CD8-positive, alpha-beta T cell (primary cell): ENCODE measurements at regions of chr16 and their contacts with region 1.

Region 1: GRCh38 chr16:29848420-29849297 is 14.4 kb downstream of the CDIPT start:
- DNase-seq: peak; percentile 62 to 92 (median 84)
- ATAC-seq: peak; percentile 98
- H3K4me3 ChIP-seq: no peak overlapping the region
- H3K4me3 Mint-ChIP-seq: no peak overlapping the region
- H3K27ac ChIP-seq: no peak overlapping the region
- H3K27ac Mint-ChIP-seq: no peak overlapping the region
- H3K4me1 ChIP-seq: no peaks in the 10 kb centered on the region
- H3K4me1 Mint-ChIP-seq: peaks cover 3% of the 10 kb centered on the region
- H3K27me3 ChIP-seq: no peaks in the 10 kb centered on the region
- H3K27me3 Mint-ChIP-seq: no peaks in the 10 kb centered on the region
- CTCF ChIP-seq: peak; percentile 78

Region 2: DNA sequence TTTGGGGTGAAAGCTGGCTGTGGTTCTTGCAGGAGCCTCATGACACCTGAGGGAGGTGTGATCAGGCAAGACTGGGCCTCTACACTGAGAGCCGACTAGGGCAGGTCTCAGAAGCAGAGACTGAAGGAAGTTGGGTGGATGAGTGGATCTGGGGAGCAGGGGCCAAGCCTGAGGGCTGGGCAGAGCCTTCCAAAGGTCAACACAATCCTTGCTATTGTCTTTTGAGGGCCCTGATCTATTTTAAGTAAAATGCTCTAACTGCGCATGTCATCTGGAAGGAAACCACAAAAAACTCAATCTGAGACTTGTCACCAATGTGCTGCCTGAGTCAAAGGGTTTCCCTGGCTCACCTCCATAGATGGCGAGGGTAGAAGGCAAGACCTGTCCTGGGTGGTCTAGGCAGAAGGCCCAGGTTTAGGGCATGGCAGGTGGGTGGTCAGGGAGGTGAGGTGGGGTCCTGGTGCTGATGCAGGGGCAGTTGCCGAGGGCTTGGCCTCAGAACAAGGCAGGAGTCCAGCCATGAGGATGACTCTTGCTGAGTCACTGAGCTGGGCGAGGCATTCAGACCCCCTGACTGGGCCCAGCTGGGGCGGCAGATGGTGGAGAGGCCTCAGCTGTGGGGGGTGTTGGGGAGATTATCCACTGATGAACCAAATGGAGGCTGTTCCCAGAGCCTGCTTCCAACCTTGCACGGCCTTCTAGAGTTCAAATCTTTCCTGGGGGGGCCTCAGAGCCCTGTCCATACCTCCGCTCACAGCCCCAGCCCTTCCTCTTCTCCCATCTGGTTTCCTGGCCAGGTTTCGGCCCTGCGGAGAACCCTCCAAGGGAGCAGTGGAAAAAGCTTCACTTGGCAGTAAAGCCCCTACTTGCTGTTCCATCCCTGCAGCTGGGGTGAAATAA is 23.3 kb before region 1 on chr16:
- CTCF ChIA-PET with region 1: interaction called, 90 read pairs
- POLR2A ChIA-PET with region 1: interaction called, 11 read pairs
- intact Hi-C with region 1: loop called in 1 of 2 experiments (anchors 1 kb)
- DNase-seq: peak in 4 of 9 experiments; percentile 32 to 63 (median 50)
- ATAC-seq: peak; percentile 25
- H3K4me3 ChIP-seq: no peak overlapping the region
- H3K4me3 Mint-ChIP-seq: peak overlapping the region; percentile 72
- H3K27ac ChIP-seq: peak overlapping the region; percentile 26 to 37
- H3K27ac Mint-ChIP-seq: peak overlapping the region; percentile 92
- H3K4me1 ChIP-seq: peaks cover 91% of the 10 kb centered on the region
- H3K4me1 Mint-ChIP-seq: peaks cover 75% of the 10 kb centered on the region
- H3K27me3 ChIP-seq: no peaks in the 10 kb centered on the region
- H3K27me3 Mint-ChIP-seq: no peaks in the 10 kb centered on the region
- CTCF ChIP-seq: no peak

Region 3: GRCh38 chr16:30024451-30024850 is 175.8 kb after region 1 on chr16:
- CTCF ChIA-PET with region 1: interaction called, 5 read pairs
- POLR2A ChIA-PET with region 1: no interaction called
- intact Hi-C with region 1: loop called in 1 of 2 experiments (anchors 5 kb)
- DNase-seq: no peak
- ATAC-seq: no peak
- H3K4me3 ChIP-seq: no peak overlapping the region
- H3K4me3 Mint-ChIP-seq: no peak overlapping the region
- H3K27ac ChIP-seq: no peak overlapping the region
- H3K27ac Mint-ChIP-seq: no peak overlapping the region
- H3K4me1 ChIP-seq: peaks cover 7% of the 10 kb centered on the region
- H3K4me1 Mint-ChIP-seq: peaks cover 5% of the 10 kb centered on the region
- H3K27me3 ChIP-seq: peaks cover 7 to 14% of the 10 kb centered on the region in 2 experiments
- H3K27me3 Mint-ChIP-seq: peaks cover 30% of the 10 kb centered on the region
- CTCF ChIP-seq: no peak

Region 4: DNA sequence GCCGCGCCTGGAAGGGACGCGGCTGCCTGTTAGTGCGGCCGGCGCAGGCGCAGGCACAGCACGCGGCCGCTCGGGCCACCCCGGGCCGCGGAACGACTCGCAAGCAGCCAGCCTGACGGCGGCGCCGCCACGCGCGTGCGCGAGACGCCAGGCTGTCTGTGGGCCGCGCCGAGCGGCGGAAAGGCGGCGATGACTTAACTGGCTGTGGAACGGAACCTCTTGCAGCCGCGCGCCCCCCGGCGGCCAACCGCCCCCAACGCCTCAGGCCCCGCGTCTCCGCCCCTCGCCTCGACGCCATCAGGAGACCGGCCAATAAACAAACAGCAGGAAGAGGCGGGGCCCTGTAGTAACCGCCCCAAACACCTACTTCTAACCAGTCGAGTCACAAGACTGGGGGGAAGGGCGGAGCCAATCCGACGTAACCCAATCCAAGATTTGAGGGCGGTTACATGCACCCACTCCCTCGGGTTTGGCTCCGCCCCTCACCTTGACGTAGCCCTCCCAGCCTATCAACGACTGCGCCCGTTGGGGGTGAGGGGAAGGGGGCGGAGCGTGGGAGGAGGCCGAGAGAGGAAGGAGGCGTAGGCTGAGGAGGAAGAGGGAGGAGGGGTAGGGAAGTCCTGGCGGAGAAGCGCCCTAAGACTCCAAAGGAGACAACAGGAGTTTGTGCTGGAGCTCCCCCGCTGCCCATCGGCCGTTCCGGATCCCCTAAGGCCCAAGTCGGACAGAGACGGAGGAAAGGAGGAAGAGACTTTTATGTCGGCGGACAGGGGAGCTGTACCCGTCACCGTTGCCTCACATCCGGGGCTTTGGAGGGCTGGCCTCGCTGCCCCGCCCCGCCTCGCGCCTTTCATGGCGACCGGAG is 809.4 kb after region 1 on chr16 and contains the start of gene FBRS:
- CTCF ChIA-PET with region 1: no interaction called
- POLR2A ChIA-PET with region 1: no interaction called
- intact Hi-C with region 1: no loop called
- DNase-seq: peak; percentile 99 to 100 (median 100)
- ATAC-seq: peak; percentile 75
- H3K4me3 ChIP-seq: peak within 1 kb of the TSS; percentile 61 to 91
- H3K4me3 Mint-ChIP-seq: peak within 1 kb of the TSS; percentile 98
- H3K27ac ChIP-seq: peak within 1 kb of the TSS; percentile 97 to 99
- H3K27ac Mint-ChIP-seq: peak within 1 kb of the TSS; percentile 100
- H3K4me1 ChIP-seq: peaks cover 36% of the 10 kb centered on the region
- H3K4me1 Mint-ChIP-seq: peaks cover 39% of the 10 kb centered on the region
- H3K27me3 ChIP-seq: no peaks in the 10 kb centered on the region
- H3K27me3 Mint-ChIP-seq: no peaks in the 10 kb centered on the region
- CTCF ChIP-seq: peak; percentile 66
- total RNA-seq, gene FBRS: 222 to 224 TPM